HepG2 (cell line): ENCODE measurements at regions of chr4 and their contacts with region 1.

Region 1: GRCh38 chr4:60805500-60806313 is 394.4 kb upstream of the ADGRL3 start:
- DNase-seq: peak; percentile 32
- ATAC-seq: peak; percentile 80
- H3K4me3 ChIP-seq: no peak overlapping the region
- H3K27ac ChIP-seq: no peak overlapping the region
- H3K4me1 ChIP-seq: no peaks in the 10 kb centered on the region
- H3K27me3 ChIP-seq: no peaks in the 10 kb centered on the region; a peak in 1 of 5 replicates
- CTCF ChIP-seq: peak; percentile 57
- EP300 ChIP-seq: no peak
- POLR2A ChIP-seq: no peak
- RAD21 ChIP-seq: no peak

Region 2: DNA sequence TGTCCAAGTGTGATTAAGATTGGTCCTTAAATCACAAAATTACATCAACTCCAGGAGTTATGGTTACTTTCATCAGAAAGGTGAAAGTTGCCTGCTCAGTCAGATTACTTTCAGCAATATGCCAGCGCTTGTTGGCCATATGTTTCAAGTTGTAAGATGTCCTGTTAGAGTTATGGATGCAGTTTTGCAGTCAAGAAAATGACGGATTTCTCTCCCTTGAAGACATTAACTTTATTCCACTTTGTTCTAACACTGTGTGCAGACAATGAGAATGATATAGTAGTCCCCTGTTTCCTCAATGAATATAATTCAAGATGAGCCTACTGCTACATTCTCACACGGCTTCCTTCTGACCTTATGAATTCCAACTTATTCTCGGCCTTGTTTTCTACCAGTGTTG is 99.5 kb after region 1 on chr4:
- CTCF ChIA-PET with region 1: no interaction called
- POLR2A ChIA-PET with region 1: no interaction called
- in situ Hi-C with region 1: no loop called
- intact Hi-C with region 1: loop called (anchors 5 kb)
- DNase-seq: no peak
- ATAC-seq: no peak
- H3K4me3 ChIP-seq: no peak overlapping the region
- H3K27ac ChIP-seq: no peak overlapping the region
- H3K4me1 ChIP-seq: no peaks in the 10 kb centered on the region
- H3K27me3 ChIP-seq: no peaks in the 10 kb centered on the region; a peak in 1 of 5 replicates
- CTCF ChIP-seq: no peak
- EP300 ChIP-seq: no peak
- POLR2A ChIP-seq: no peak
- RAD21 ChIP-seq: no peak

Region 3: GRCh38 chr4:60962286-60962685 is 156.6 kb after region 1 on chr4:
- CTCF ChIA-PET with region 1: interaction called, 6 read pairs
- POLR2A ChIA-PET with region 1: no interaction called
- in situ Hi-C with region 1: no loop called
- intact Hi-C with region 1: loop called (anchors 1 kb)
- DNase-seq: no peak
- ATAC-seq: peak; percentile 38; the same call in 1 of the 3 replicates
- H3K4me3 ChIP-seq: no peak overlapping the region
- H3K27ac ChIP-seq: no peak overlapping the region
- H3K4me1 ChIP-seq: no peaks in the 10 kb centered on the region
- H3K27me3 ChIP-seq: no peaks in the 10 kb centered on the region
- CTCF ChIP-seq: no peak
- EP300 ChIP-seq: no peak
- POLR2A ChIP-seq: no peak
- RAD21 ChIP-seq: no peak